ENCODE measurements at regions of chr7 and their contacts with region 1.

Region 1: GRCh38 chr7:155815332-155816191 is 3.3 kb upstream of the SHH start:
- DNase-seq: no peak
- ATAC-seq: peak; percentile 97
- H3K4me3 ChIP-seq: no peak overlapping the region
- H3K27ac ChIP-seq: no peak overlapping the region
- H3K4me1 ChIP-seq: peaks cover 0 to 6% of the 10 kb centered on the region in 2 experiments; a peak in 2 of 4 replicates
- H3K27me3 ChIP-seq: 0 out of 2 replicates have a peak, but pooled peaks cover 5% of the 10 kb centered on the region
- CTCF ChIP-seq: peak; percentile 75 to 86 (median 83)
- POLR2A ChIP-seq: no peak
- RAD21 ChIP-seq: peak; percentile 98

Region 2: GRCh38 chr7:156156734-156157610 is 341.4 kb after region 1 on chr7:
- CTCF ChIA-PET with region 1: interaction called, 3 read pairs
- POLR2A ChIA-PET with region 1: no interaction called
- RAD21 ChIA-PET with region 1: no interaction called
- intact Hi-C with region 1: loop called (anchors 1 kb)
- DNase-seq: peak; percentile 54
- ATAC-seq: peak; percentile 83
- H3K4me3 ChIP-seq: no peak overlapping the region
- H3K27ac ChIP-seq: no peak overlapping the region; the same call in 1 of the 2 replicates
- H3K4me1 ChIP-seq: peaks cover 6 to 16% of the 10 kb centered on the region in 2 experiments; a peak in 3 of 4 replicates
- H3K27me3 ChIP-seq: no peaks in the 10 kb centered on the region
- CTCF ChIP-seq: peak; percentile 39 to 67 (median 57); a peak in 5 of 6 replicates
- POLR2A ChIP-seq: no peak
- RAD21 ChIP-seq: peak; percentile 80

Region 3: GRCh38 chr7:156473476-156474240 is 658.1 kb after region 1 on chr7:
- CTCF ChIA-PET with region 1: interaction called, 5 read pairs
- POLR2A ChIA-PET with region 1: no interaction called
- RAD21 ChIA-PET with region 1: no interaction called
- intact Hi-C with region 1: loop called (anchors 1 kb)
- DNase-seq: peak; percentile 27
- ATAC-seq: peak; percentile 90
- H3K4me3 ChIP-seq: no peak overlapping the region
- H3K27ac ChIP-seq: no peak overlapping the region
- H3K4me1 ChIP-seq: peaks cover 0 to 19% of the 10 kb centered on the region in 2 experiments; a peak in 2 of 4 replicates
- H3K27me3 ChIP-seq: no peaks in the 10 kb centered on the region
- CTCF ChIP-seq: peak; percentile 85 to 90 (median 87)
- POLR2A ChIP-seq: no peak
- RAD21 ChIP-seq: peak; percentile 91

Region 4: DNA sequence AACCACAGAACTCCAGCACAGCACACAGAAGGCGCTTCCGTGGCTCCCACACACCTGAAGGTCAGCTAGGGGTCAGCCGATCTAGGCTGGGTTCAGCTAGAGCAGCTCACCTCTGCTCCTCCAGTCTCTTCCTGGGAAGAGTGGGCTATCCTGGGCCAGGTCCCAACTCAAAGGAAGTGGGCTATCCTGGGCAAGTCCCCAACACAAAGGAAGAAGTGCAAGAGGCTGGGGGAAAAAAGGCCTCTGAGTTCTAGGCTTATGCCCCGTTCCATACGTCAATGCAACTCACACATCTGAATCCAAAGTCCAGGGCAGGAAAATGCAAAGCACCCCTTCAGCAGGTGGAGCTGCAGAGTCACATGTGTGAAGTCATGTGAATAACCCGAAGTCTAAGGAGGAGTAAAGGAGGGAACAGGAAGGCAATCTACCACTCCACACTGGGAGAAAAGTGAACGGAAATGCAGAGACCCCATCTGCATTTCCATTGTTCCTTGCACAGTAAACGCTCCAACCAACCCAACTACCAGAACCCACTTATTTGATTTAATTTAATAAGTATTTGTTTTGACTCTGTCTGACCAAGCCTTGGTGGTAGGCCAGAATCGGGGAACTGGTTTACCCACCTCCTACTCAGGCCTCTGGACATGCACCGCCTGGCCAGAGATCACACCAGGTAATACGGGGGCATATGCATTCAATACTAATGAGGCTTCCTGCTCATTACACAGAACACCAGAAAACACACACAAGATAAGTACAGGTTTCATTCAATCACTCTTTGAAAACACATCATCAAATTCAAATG is 729.6 kb after region 1 on chr7:
- CTCF ChIA-PET with region 1: no interaction called
- POLR2A ChIA-PET with region 1: no interaction called
- RAD21 ChIA-PET with region 1: no interaction called
- intact Hi-C with region 1: no loop called
- DNase-seq: no peak
- ATAC-seq: peak; percentile 68
- H3K4me3 ChIP-seq: no peak overlapping the region
- H3K27ac ChIP-seq: no peak overlapping the region
- H3K4me1 ChIP-seq: no peaks in the 10 kb centered on the region
- H3K27me3 ChIP-seq: peaks cover 8% of the 10 kb centered on the region; the same call in 1 of the 2 replicates
- CTCF ChIP-seq: no peak
- POLR2A ChIP-seq: no peak
- RAD21 ChIP-seq: peak; percentile 39

Measured in HCT116 (cell line).